ENCODE measurements at regions of chr11 and their contacts with region 1.

Region 1: GRCh38 chr11:67353317-67354074 is at the start of gene POLD4:
- DNase-seq: peak; percentile 91 to 97 (median 95)
- ATAC-seq: peak; percentile 93
- H3K4me3 ChIP-seq: peak within 1 kb of the TSS; percentile 96
- H3K4me3 Mint-ChIP-seq: peak within 1 kb of the TSS; percentile 85 to 100 (median 97)
- H3K27ac ChIP-seq: peak within 1 kb of the TSS; percentile 97
- H3K27ac Mint-ChIP-seq: peak within 1 kb of the TSS; percentile 97 to 100 (median 99)
- H3K4me1 ChIP-seq: peaks cover 30 to 45% of the 10 kb centered on the region in 2 donors
- H3K4me1 Mint-ChIP-seq: peaks cover 31 to 64% (median 50%) of the 10 kb centered on the region in 7 donors
- H3K27me3 ChIP-seq: no peaks in the 10 kb centered on the region
- H3K27me3 Mint-ChIP-seq: peaks cover 0 to 5% (median 0%) of the 10 kb centered on the region in 5 donors
- total RNA-seq, gene POLD4: 59.9 to 104 (median 76.1) TPM

Region 2: GRCh38 chr11:66958232-66958955 is 395.1 kb before region 1 on chr11 and contains the start of gene PC:
- CTCF ChIA-PET with region 1: no interaction called
- POLR2A ChIA-PET with region 1: no interaction called
- intact Hi-C with region 1: loop called in 1 of 2 experiments (anchors 2 kb)
- DNase-seq: peak; percentile 83 to 98 (median 96)
- ATAC-seq: peak; percentile 98
- H3K4me3 ChIP-seq: peak within 1 kb of the TSS; percentile 81
- H3K4me3 Mint-ChIP-seq: peak within 1 kb of the TSS; percentile 82 to 95 (median 91)
- H3K27ac ChIP-seq: peak within 1 kb of the TSS; percentile 64
- H3K27ac Mint-ChIP-seq: peak within 1 kb of the TSS; percentile 76 to 93 (median 87)
- H3K4me1 ChIP-seq: peaks cover 8 to 19% of the 10 kb centered on the region in 2 donors
- H3K4me1 Mint-ChIP-seq: peaks cover 16 to 31% (median 27%) of the 10 kb centered on the region in 7 donors
- H3K27me3 ChIP-seq: no peaks in the 10 kb centered on the region
- H3K27me3 Mint-ChIP-seq: peaks cover 0 to 6% (median 0%) of the 10 kb centered on the region in 5 donors
- total RNA-seq, gene PC: 8.4 to 11.2 (median 10.0) TPM

Region 3: DNA sequence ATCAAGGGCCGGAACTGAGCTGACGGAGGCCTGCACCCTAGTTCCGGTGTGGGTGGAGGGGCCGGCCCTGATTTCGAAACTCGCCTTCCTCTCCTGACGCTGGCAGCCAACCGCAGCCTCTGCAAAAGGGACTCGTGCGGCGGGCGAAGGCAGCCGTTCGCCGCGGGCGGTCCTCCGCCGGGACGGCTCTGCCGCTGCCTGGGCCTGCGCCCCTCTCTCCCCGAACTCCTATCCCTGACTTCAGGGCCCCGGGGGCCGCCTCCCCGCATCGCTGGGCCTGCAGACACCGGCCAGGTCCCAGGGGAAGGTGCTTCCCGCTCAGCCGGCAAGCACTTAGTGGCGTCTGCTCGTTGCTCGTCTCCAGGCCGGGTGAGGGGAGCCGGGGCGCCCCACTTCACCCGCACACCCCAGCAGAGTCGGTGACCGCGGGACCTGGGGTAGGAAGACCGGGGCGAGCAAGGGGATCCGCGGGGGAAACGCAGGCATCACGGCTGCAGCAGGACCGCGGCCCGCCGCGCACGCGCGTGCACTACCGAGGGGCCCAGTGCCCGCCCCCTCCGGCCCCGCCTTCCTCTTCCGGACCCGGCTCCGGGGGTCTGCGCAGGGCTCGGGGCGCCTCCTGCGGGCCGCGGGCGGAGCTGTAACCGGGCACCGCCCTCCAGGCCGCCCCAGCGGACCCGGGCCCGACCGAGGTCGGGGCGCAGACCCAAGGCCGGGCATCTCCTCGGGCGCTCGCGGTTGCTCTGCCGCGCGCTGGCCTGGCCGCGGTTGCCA is 64.9 kb before region 1 on chr11:
- CTCF ChIA-PET with region 1: interaction called, 3 read pairs
- POLR2A ChIA-PET with region 1: interaction called, 9 read pairs
- intact Hi-C with region 1: loop called in 1 of 2 experiments (anchors 5 kb)
- DNase-seq: peak; percentile 84 to 94 (median 91)
- ATAC-seq: peak; percentile 82
- H3K4me3 ChIP-seq: peak overlapping the region; percentile 95
- H3K4me3 Mint-ChIP-seq: peak overlapping the region; percentile 76 to 98 (median 85)
- H3K27ac ChIP-seq: peak overlapping the region; percentile 81
- H3K27ac Mint-ChIP-seq: peak overlapping the region; percentile 95 to 99 (median 97)
- H3K4me1 ChIP-seq: peaks cover 54 to 60% of the 10 kb centered on the region in 2 donors
- H3K4me1 Mint-ChIP-seq: peaks cover 29 to 73% (median 57%) of the 10 kb centered on the region in 7 donors
- H3K27me3 ChIP-seq: no peaks in the 10 kb centered on the region
- H3K27me3 Mint-ChIP-seq: peaks cover 0 to 2% (median 0%) of the 10 kb centered on the region in 5 donors

Region 4: GRCh38 chr11:67382276-67383136 is 29.0 kb after region 1 on chr11:
- CTCF ChIA-PET with region 1: interaction called, 495 read pairs
- POLR2A ChIA-PET with region 1: interaction called, 272 read pairs
- intact Hi-C with region 1: loop called (anchors 1 kb)
- DNase-seq: peak; percentile 67 to 86 (median 79)
- ATAC-seq: peak; percentile 96
- H3K4me3 ChIP-seq: no peak overlapping the region
- H3K4me3 Mint-ChIP-seq: no peak overlapping the region
- H3K27ac ChIP-seq: no peak overlapping the region
- H3K27ac Mint-ChIP-seq: peak overlapping the region in 2 of 9 donors; percentile 1 to 79
- H3K4me1 ChIP-seq: peaks cover 0 to 5% of the 10 kb centered on the region in 2 donors
- H3K4me1 Mint-ChIP-seq: peaks cover 4 to 20% (median 8%) of the 10 kb centered on the region in 7 donors
- H3K27me3 ChIP-seq: no peaks in the 10 kb centered on the region
- H3K27me3 Mint-ChIP-seq: peaks cover 0 to 38% (median 0%) of the 10 kb centered on the region in 5 donors

Region 5: GRCh38 chr11:67439321-67439883 is 85.9 kb after region 1 on chr11:
- CTCF ChIA-PET with region 1: no interaction called
- POLR2A ChIA-PET with region 1: interaction called, 20 read pairs
- intact Hi-C with region 1: no loop called
- DNase-seq: peak in 1 of 9 donors; percentile 55
- ATAC-seq: no peak
- H3K4me3 ChIP-seq: peak overlapping the region; percentile 100
- H3K4me3 Mint-ChIP-seq: peak overlapping the region; percentile 85 to 99 (median 97)
- H3K27ac ChIP-seq: peak overlapping the region; percentile 85
- H3K27ac Mint-ChIP-seq: peak overlapping the region; percentile 90 to 97 (median 95)
- H3K4me1 ChIP-seq: peaks cover 38 to 64% of the 10 kb centered on the region in 2 donors
- H3K4me1 Mint-ChIP-seq: peaks cover 40 to 74% (median 55%) of the 10 kb centered on the region in 7 donors
- H3K27me3 ChIP-seq: no peaks in the 10 kb centered on the region
- H3K27me3 Mint-ChIP-seq: no peaks in the 10 kb centered on the region

Region 6: DNA sequence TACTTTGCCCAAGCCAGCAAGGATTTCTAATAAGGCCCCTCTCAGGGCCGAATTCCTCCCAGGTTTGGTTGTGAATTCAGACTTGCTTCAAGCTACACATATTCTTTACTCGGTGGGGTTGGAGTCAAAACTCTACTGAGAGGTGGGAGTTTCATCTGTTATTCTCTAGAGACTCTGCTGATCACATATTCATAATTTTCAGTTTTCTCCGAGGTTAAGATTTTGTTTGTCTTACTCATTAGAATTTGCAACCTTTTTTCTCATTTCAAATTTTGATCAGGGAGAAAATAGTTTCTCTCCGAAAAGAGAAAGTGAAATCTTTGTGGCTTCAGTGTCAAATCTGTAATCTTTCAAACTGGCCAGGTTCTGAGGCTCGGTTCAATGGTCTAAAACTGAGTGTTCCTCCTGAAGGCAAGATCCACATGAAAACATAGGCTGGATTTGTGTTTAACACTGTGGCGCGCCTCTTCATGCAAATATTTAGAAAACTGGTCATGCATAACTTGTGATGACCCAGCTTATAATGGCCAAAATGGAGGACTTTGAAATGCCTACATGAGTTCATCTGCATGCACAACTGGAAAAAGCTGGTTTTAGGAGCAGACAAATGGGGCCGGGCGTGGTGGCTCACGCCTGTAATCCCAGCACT is 208.6 kb after region 1 on chr11:
- CTCF ChIA-PET with region 1: no interaction called
- POLR2A ChIA-PET with region 1: no interaction called
- intact Hi-C with region 1: no loop called
- DNase-seq: no peak
- ATAC-seq: no peak
- H3K4me3 ChIP-seq: no peak overlapping the region
- H3K4me3 Mint-ChIP-seq: no peak overlapping the region
- H3K27ac ChIP-seq: no peak overlapping the region
- H3K27ac Mint-ChIP-seq: peak overlapping the region in 1 of 9 donors; percentile 29
- H3K4me1 ChIP-seq: no peaks in the 10 kb centered on the region
- H3K4me1 Mint-ChIP-seq: peaks cover 0 to 9% (median 0%) of the 10 kb centered on the region in 7 donors
- H3K27me3 ChIP-seq: no peaks in the 10 kb centered on the region
- H3K27me3 Mint-ChIP-seq: peaks cover 0 to 18% (median 0%) of the 10 kb centered on the region in 5 donors

Region 7: DNA sequence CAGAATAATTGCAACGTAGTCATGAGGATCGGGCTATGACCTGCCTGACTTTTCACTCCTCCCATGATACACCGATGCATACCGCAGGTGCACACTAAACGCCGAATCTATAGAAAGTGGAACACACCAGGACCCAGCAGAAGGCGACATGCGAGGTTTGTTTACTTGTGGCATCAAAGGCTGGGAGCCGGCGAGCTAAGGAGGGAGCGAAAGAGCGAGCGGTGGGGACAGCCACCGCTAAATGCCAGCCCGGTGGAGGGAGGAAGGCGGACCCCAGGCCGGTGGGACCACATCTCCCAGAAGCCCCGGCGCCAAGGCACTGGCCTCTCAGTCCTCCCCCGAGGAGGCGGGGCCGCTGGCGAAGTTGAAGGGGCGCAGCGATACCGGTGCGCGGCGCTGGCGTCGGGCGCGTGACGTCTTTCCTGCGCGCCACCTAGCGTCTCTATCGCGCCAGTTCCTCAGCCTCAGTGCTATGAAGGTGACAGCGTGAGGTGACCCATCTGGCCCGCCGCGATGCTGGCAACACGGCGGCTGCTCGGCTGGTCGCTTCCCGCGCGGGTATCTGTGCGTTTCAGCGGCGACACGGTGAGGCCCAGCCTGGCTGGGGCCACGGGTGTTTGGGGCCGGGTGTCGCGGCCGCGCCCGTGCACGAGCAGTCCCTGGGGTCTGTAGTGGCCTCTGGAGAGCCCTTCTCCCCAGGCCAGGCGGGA is 253.2 kb after region 1 on chr11 and contains the start of gene NDUFV1:
- CTCF ChIA-PET with region 1: interaction called, 4 read pairs
- POLR2A ChIA-PET with region 1: interaction called, 3 read pairs
- intact Hi-C with region 1: loop called in 1 of 2 experiments (anchors 1 kb)
- DNase-seq: peak; percentile 90 to 96 (median 94)
- ATAC-seq: peak; percentile 100
- H3K4me3 ChIP-seq: peak within 1 kb of the TSS; percentile 97
- H3K4me3 Mint-ChIP-seq: peak within 1 kb of the TSS; percentile 85 to 99 (median 93)
- H3K27ac ChIP-seq: peak within 1 kb of the TSS; percentile 87
- H3K27ac Mint-ChIP-seq: peak within 1 kb of the TSS; percentile 78 to 96 (median 93)
- H3K4me1 ChIP-seq: peaks cover 8 to 19% of the 10 kb centered on the region in 2 donors
- H3K4me1 Mint-ChIP-seq: peaks cover 0 to 36% (median 14%) of the 10 kb centered on the region in 7 donors
- H3K27me3 ChIP-seq: no peaks in the 10 kb centered on the region
- H3K27me3 Mint-ChIP-seq: peaks cover 0 to 16% (median 10%) of the 10 kb centered on the region in 5 donors
- total RNA-seq, gene NDUFV1: 198 to 253 (median 212) TPM

Measured in naive thymus-derived CD4-positive, alpha-beta T cell (primary cell).